ENCODE measurements at regions of chr22 and their contacts with region 1.

Region 1: GRCh38 chr22:32985899-32986765 is 72.0 kb downstream of the SYN3 start:
- DNase-seq: peak; percentile 67
- H3K4me3 ChIP-seq: no peak overlapping the region
- H3K27ac ChIP-seq: no peak overlapping the region
- H3K4me1 ChIP-seq: peaks cover 0 to 4% (median 1%) of the 10 kb centered on the region in 4 donors
- H3K27me3 ChIP-seq: no peaks in the 10 kb centered on the region
- CTCF ChIP-seq: peak; percentile 70 to 88 (median 79)
- EP300 ChIP-seq: no peak
- POLR2A ChIP-seq: no peak

Region 2: GRCh38 chr22:32655068-32655467 is 331.1 kb before region 1 on chr22:
- in situ Hi-C with region 1: loop called in 2 of 4 experiments (anchors 10 to 25 kb)
- intact Hi-C with region 1: loop called (anchors 5 kb)
- DNase-seq: no peak
- H3K4me3 ChIP-seq: no peak overlapping the region
- H3K27ac ChIP-seq: no peak overlapping the region
- H3K4me1 ChIP-seq: no peaks in the 10 kb centered on the region
- H3K27me3 ChIP-seq: no peaks in the 10 kb centered on the region
- CTCF ChIP-seq: no peak
- EP300 ChIP-seq: no peak
- POLR2A ChIP-seq: no peak

Region 3: GRCh38 chr22:32660292-32660691 is 325.8 kb before region 1 on chr22:
- in situ Hi-C with region 1: loop called in 2 of 4 experiments (anchors 10 to 25 kb)
- intact Hi-C with region 1: loop called (anchors 5 kb)
- DNase-seq: peak; percentile 69
- H3K4me3 ChIP-seq: no peak overlapping the region
- H3K27ac ChIP-seq: no peak overlapping the region
- H3K4me1 ChIP-seq: no peaks in the 10 kb centered on the region
- H3K27me3 ChIP-seq: no peaks in the 10 kb centered on the region
- CTCF ChIP-seq: peak; percentile 68 to 74 (median 72)
- EP300 ChIP-seq: no peak
- POLR2A ChIP-seq: no peak

Region 4: DNA sequence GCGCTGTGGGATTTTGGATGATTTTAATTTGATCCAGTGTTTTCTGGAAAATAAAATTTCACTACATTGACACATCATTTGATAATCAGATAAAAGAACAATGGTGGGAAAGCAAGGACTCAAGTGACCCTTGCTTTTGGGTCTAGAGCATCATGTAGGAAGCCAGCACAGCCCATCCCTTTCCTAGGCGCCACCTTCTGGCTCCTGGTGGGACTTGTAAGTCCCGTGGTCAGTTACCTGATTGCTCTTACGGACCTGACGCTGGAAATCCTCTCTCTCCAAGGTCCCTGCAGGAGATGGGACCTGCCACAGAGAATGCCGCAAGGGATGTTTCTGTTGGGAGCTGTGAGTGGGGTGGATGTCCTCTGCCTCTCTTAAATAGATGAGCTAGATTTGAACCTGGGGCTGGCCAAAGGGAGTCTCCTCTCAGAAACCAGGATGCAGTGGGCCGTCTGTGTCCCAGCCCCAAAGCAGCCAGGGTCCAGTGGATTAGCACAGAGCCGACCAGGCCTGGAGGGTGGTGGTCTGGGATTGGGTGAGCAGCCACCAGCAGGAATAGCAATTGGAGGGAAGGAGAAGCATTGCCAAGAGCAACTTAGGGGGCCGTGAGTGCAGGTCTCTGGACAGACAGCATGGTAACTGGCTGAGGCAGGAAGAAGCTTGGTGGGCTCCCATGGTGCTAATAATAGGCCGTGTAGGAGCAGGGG is 163.0 kb before region 1 on chr22:
- in situ Hi-C with region 1: no loop called
- intact Hi-C with region 1: no loop called
- DNase-seq: peak; percentile 45
- H3K4me3 ChIP-seq: no peak overlapping the region
- H3K27ac ChIP-seq: no peak overlapping the region
- H3K4me1 ChIP-seq: peaks cover 9 to 31% (median 16%) of the 10 kb centered on the region in 4 donors
- H3K27me3 ChIP-seq: no peaks in the 10 kb centered on the region
- CTCF ChIP-seq: peak; percentile 25 to 45 (median 36)
- EP300 ChIP-seq: no peak
- POLR2A ChIP-seq: no peak

Region 5: DNA sequence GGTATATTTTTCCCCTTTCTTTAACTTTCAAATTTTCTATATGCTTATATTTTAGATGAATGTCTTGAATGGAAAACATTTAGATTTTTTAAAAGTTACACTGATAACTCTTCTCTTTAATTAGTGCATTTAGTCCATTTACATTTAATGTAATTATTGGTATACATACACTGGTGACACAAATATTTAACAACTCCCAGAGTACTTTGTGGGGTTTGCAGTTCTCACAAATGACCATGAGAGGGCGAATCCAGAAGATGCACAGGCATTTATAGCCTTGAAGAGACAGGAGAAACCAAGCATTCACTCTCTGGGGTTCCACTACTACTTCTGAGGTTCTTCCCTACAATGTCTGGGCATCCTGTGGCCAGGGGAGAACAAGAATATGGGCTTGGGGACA is 59.5 kb before region 1 on chr22:
- in situ Hi-C with region 1: no loop called
- intact Hi-C with region 1: loop called (anchors 5 kb)
- DNase-seq: no peak
- H3K4me3 ChIP-seq: no peak overlapping the region
- H3K27ac ChIP-seq: no peak overlapping the region
- H3K4me1 ChIP-seq: no peaks in the 10 kb centered on the region
- H3K27me3 ChIP-seq: no peaks in the 10 kb centered on the region
- CTCF ChIP-seq: peak; percentile 31 to 60 (median 53)
- EP300 ChIP-seq: no peak
- POLR2A ChIP-seq: no peak

Measured in transverse colon (tissue), 4 donors.